Thyroid gland (tissue), 4 donors: ENCODE measurements at regions of chr19 and their contacts with region 1.

Region 1: DNA sequence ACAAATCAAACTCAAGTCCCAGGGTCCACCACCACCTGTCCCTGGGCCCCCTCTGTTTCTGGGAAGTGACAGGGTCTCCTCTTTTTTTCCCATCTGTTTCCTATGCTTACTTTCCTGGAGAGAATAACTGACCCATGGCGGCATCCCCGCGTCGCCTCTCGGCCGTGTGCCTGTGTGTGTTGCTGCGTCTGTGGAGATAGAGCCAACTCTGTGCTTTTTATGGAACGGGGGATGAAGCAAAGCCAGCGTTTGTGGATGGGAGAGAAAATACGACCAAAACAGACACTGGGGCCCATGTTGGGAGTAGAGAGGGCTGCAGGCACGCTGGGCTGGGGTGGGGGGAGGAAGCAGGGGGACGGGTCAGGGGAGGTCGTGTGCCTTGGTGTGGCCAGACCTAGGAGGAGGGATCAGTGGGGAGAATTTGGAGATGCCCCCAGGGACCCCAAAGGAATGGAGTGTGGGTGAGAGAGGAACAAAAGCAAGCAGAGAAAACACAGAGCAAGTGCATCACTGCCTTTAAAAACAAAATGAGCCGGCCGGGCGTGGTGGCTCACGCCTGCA is 16.6 kb downstream of the PLK5 start:
- DNase-seq: no peak
- H3K4me3 ChIP-seq: no peak overlapping the region
- H3K27ac ChIP-seq: no peak overlapping the region
- H3K4me1 ChIP-seq: no peaks in the 10 kb centered on the region
- H3K27me3 ChIP-seq: no peaks in the 10 kb centered on the region
- CTCF ChIP-seq: no peak
- POLR2A ChIP-seq: no peak

Region 2: GRCh38 chr19:1411255-1412191 is 128.9 kb before region 1 on chr19:
- intact Hi-C with region 1: no loop called
- DNase-seq: no peak
- H3K4me3 ChIP-seq: no peak overlapping the region
- H3K27ac ChIP-seq: peak overlapping the region in 1 of 3 donors; percentile 28
- H3K4me1 ChIP-seq: peaks cover 47 to 63% of the 10 kb centered on the region in 2 donors
- H3K27me3 ChIP-seq: no peaks in the 10 kb centered on the region
- CTCF ChIP-seq: no peak
- POLR2A ChIP-seq: no peak

Region 3: DNA sequence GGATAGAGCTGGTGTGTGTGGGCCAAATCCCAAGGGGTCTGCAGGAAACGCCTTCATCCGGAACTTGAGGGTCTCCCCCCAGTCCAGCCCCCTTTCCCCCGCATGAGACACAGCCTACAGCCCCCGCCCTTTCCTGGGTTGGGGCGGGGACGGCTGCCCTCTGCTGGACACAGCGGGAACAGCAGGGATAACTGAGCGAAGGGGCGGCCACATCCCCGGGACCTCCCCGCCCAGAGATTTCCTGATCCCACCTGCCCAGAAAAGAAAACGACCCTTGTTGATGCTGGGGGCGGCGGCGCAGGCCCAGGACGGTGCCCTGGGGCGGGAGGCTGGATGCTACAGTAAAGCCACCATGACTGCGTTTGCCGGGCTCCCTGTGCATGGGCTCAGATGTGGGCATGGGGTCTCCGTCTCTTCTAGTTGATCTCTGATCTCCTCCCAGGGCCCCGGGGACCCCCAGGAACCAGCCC is 227.1 kb after region 1 on chr19:
- intact Hi-C with region 1: loop called (anchors 5 kb)
- DNase-seq: peak; percentile 12 to 27
- H3K4me3 ChIP-seq: no peak overlapping the region
- H3K27ac ChIP-seq: no peak overlapping the region
- H3K4me1 ChIP-seq: no peaks in the 10 kb centered on the region
- H3K27me3 ChIP-seq: peaks cover 23% of the 10 kb centered on the region
- CTCF ChIP-seq: peak; percentile 72 to 98 (median 81)
- POLR2A ChIP-seq: no peak